Prostate gland (tissue), 2 donors: ENCODE measurements at regions of chr18 and their contacts with region 1.

Region 1: GRCh38 chr18:63022429-63023022 is 297.0 kb downstream of the BCL2 start:
- DNase-seq: no peak
- H3K4me3 ChIP-seq: no peak overlapping the region
- H3K27ac ChIP-seq: no peak overlapping the region
- H3K4me1 ChIP-seq: no peaks in the 10 kb centered on the region
- H3K27me3 ChIP-seq: no peaks in the 10 kb centered on the region
- CTCF ChIP-seq: peak in 1 of 4 experiments; percentile 6
- POLR2A ChIP-seq: no peak

Region 2: DNA sequence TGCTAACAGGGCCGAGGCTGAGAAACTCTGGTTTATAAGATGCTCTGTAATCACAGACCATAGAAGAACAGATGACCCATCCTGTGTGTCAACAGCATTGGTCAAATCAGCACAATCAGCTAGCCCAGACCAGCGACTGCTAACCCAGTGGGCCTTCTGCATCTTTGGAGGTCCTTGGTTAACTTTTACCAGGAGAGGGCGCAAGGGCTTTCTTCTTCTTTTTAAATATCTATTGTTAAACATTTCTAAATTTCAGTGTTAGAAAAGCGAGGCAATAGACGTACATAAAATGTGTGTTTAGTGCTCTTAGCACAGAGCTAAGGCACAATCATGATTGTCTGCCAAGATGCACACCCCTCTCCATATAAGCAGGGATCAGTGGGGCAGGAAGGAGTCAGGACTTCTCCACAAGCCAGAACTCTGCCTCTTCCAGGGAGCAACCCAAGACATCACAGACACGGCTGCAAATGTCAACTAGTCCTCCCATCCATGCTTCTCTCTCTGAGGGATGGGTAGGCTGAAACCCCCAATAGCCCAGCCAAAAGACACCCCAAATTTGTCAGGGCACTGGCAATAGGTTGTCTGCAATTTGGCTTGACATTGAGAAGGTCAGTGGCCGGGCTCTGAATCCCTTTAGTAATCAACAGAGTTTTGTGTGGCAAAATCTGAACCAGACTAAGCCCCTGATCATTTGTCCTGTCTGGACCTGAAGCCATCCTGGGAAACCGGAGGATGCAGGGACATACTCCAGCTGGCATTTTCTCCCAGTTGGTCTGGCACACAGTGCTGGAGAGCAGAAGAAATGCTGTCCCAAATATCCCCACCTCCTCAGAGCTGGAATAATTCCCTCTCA is 108.8 kb after region 1 on chr18:
- intact Hi-C with region 1: loop called (anchors 5 kb)
- DNase-seq: peak; percentile 68
- H3K4me3 ChIP-seq: no peak overlapping the region
- H3K27ac ChIP-seq: peak overlapping the region in 1 of 2 donors; percentile 42
- H3K4me1 ChIP-seq: peaks cover 12% of the 10 kb centered on the region
- H3K27me3 ChIP-seq: no peaks in the 10 kb centered on the region
- CTCF ChIP-seq: peak; percentile 51 to 72 (median 68)
- POLR2A ChIP-seq: no peak

Region 3: DNA sequence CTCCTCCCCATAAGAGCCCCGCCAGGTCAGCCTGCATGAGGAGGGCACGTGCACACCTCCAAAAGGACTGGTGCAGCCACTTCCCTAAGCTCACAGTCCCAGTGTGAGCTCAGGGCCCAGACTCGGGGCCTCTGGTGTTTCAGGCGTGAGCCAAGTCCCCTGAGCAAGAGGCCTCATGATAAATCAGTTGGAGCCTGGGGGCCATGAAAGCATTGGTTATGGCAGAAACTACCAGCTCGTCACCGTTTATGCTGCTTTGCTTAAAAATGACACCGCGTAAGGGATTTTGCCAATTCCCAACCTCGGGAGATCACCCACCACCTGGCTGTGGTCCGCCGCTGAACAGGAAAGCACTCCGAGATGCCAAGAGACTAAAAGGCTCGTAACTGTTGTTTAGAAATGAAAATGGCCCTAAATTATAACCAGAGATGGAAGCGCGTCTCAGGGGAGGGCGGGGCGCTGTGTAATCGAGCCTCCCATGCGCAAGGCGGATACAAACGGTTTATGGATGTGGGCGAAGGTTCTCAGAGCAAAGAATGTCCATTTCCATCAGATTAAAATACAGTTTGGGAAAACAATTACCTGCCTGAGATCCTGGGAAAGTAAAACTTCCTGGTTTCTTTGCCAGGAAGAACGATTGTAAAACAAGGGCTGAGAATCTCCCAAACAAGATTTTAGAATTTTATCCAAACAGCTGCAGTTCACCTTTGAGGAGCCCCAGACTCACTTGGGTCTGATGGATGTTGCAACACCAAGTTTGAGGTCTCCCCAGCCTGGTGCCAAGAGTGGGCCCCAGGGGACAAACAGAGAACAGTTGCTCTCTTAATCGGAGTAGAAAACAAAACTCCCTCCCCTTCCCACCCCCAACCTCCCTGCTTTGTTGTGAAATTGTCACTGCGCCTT is 155.6 kb after region 1 on chr18:
- intact Hi-C with region 1: no loop called
- DNase-seq: peak; percentile 73
- H3K4me3 ChIP-seq: peak overlapping the region in 1 of 2 donors; percentile 2
- H3K27ac ChIP-seq: peak overlapping the region; percentile 79 to 80
- H3K4me1 ChIP-seq: peaks cover 6% of the 10 kb centered on the region
- H3K27me3 ChIP-seq: no peaks in the 10 kb centered on the region
- CTCF ChIP-seq: no peak
- POLR2A ChIP-seq: no peak